ENCODE measurements at regions of chr12 and their contacts with region 1.

Region 1: DNA sequence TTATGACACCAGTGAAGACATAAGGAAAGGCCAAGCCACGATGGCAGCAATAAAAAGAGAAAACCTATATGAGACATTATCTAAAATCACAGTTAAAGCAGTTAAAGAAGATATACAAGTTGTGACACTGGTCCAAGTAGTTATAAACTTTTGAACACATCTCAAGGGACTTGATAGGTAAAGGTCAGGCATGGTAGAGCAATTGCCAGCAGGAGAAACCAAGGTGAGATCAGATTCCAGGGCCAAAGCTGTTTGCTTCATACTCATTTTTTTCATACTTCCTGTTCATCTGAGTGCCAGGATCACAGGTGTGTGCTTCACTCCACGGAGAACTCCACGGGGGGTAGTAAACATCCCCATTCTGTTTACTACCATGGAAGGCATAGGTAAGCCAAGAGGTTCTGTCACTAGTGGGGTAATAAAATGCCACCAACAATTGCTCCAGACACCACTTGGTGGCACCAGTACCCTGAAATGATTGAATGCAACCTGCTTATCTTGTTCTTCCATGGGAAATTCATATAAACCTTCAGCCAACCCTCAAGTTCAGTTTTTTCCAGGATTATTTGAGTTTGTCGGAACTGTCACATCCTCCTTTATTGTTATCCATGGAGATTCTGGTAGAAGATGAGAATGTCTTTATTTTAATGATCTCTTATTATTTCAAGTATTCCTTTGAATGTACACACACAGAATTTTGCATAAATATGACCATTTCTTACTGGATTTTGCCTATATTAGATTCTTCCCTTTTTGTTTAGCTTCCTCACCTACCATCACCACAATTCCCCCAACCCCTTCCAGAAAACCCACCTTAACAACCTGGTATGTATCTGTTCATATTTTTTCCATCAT is 59.2 kb upstream of the TSPAN8 start:
- DNase-seq: peak; percentile 20 to 79 (median 47)
- ATAC-seq: peak; percentile 95
- H3K4me3 ChIP-seq: no peak overlapping the region
- H3K27ac ChIP-seq: no peak overlapping the region
- H3K4me1 ChIP-seq: peaks cover 0 to 6% of the 10 kb centered on the region in 2 experiments; a peak in 2 of 5 replicates
- H3K27me3 ChIP-seq: no peaks in the 10 kb centered on the region
- CTCF ChIP-seq: peak; percentile 72 to 86 (median 74)
- EP300 ChIP-seq: no peak
- POLR2A ChIP-seq: no peak
- RAD21 ChIP-seq: peak; percentile 91 to 96

Region 2: DNA sequence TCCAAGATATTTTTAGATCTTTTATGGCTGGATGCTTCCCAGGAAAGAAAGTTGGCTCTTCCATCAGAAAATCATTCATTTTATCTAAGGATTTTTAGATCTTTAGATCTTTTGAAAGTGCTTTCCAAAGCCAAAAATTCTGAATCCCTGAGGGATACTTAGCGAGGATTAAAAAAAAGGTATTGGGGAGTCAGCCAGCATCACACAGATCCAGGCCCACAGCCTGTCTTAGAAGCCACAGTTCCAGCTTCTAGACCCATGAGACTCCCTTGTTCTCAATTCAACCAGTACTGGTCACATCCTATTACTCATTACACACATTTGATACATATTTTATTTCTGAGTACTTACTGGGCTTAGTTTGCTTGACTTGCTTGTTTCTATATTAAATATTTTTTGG is 109.0 kb before region 1 on chr12:
- CTCF ChIA-PET with region 1: no interaction called
- POLR2A ChIA-PET with region 1: no interaction called
- in situ Hi-C with region 1: no loop called
- intact Hi-C with region 1: no loop called
- DNase-seq: no peak
- ATAC-seq: no peak
- H3K4me3 ChIP-seq: no peak overlapping the region
- H3K27ac ChIP-seq: no peak overlapping the region
- H3K4me1 ChIP-seq: no peaks in the 10 kb centered on the region
- H3K27me3 ChIP-seq: no peaks in the 10 kb centered on the region
- CTCF ChIP-seq: no peak
- EP300 ChIP-seq: no peak
- POLR2A ChIP-seq: no peak
- RAD21 ChIP-seq: no peak

Region 3: GRCh38 chr12:71371122-71371521 is 154.2 kb after region 1 on chr12:
- CTCF ChIA-PET with region 1: no interaction called
- POLR2A ChIA-PET with region 1: no interaction called
- in situ Hi-C with region 1: no loop called
- intact Hi-C with region 1: loop called (anchors 1 kb)
- DNase-seq: peak in 1 of 4 experiments; percentile 56
- ATAC-seq: peak; percentile 82
- H3K4me3 ChIP-seq: no peak overlapping the region
- H3K27ac ChIP-seq: no peak overlapping the region
- H3K4me1 ChIP-seq: no peaks in the 10 kb centered on the region; a peak in 1 of 5 replicates
- H3K27me3 ChIP-seq: no peaks in the 10 kb centered on the region
- CTCF ChIP-seq: peak; percentile 30 to 61 (median 44); a peak in 3 of 6 replicates
- EP300 ChIP-seq: no peak
- POLR2A ChIP-seq: no peak
- RAD21 ChIP-seq: peak; percentile 65 to 76

Region 4: GRCh38 chr12:71392521-71393145 is 175.7 kb after region 1 on chr12:
- CTCF ChIA-PET with region 1: no interaction called
- POLR2A ChIA-PET with region 1: no interaction called
- in situ Hi-C with region 1: loop called (anchors 10 kb)
- intact Hi-C with region 1: loop called (anchors 1 kb)
- DNase-seq: peak; percentile 63 to 79 (median 70)
- ATAC-seq: peak; percentile 98
- H3K4me3 ChIP-seq: no peak overlapping the region
- H3K27ac ChIP-seq: no peak overlapping the region
- H3K4me1 ChIP-seq: peaks cover 0 to 10% of the 10 kb centered on the region in 2 experiments; a peak in 2 of 5 replicates
- H3K27me3 ChIP-seq: no peaks in the 10 kb centered on the region
- CTCF ChIP-seq: peak; percentile 73 to 85 (median 84)
- EP300 ChIP-seq: no peak
- POLR2A ChIP-seq: no peak
- RAD21 ChIP-seq: peak; percentile 63 to 89

Region 5: DNA sequence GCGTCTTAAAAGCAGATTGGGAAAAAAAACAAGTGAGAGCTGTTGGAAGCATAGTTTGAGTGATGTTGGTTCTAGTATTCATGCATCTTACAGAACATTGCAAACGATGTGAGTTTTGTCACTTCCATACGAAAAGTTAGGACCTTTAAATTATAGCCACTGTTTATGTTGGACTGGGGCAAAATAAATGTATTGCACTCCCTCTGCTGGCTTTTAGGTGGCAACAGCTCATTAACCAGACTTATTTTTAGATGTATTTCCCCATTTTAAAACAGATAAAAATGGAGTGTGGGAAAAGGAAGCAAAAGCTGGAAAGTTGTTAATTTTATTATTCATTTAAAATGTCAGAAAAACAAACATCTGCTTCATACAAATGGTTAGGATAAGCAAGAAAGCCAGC is 334.6 kb after region 1 on chr12:
- CTCF ChIA-PET with region 1: no interaction called
- POLR2A ChIA-PET with region 1: interaction called, 3 read pairs
- in situ Hi-C with region 1: no loop called
- intact Hi-C with region 1: loop called (anchors 1 kb)
- DNase-seq: peak in 2 of 4 experiments; percentile 13 to 28
- ATAC-seq: peak; percentile 73
- H3K4me3 ChIP-seq: no peak overlapping the region
- H3K27ac ChIP-seq: no peak overlapping the region
- H3K4me1 ChIP-seq: no peaks in the 10 kb centered on the region
- H3K27me3 ChIP-seq: no peaks in the 10 kb centered on the region
- CTCF ChIP-seq: peak; percentile 48 to 79 (median 60); a peak in 4 of 6 replicates
- EP300 ChIP-seq: no peak
- POLR2A ChIP-seq: no peak
- RAD21 ChIP-seq: peak; percentile 67 to 83

Region 6: GRCh38 chr12:71567537-71567936 is 350.6 kb after region 1 on chr12:
- CTCF ChIA-PET with region 1: no interaction called
- POLR2A ChIA-PET with region 1: no interaction called
- in situ Hi-C with region 1: no loop called
- intact Hi-C with region 1: loop called (anchors 5 kb)
- DNase-seq: peak; percentile 18 to 74 (median 31)
- ATAC-seq: peak; percentile 95
- H3K4me3 ChIP-seq: no peak overlapping the region
- H3K27ac ChIP-seq: no peak overlapping the region
- H3K4me1 ChIP-seq: peaks cover 0 to 10% of the 10 kb centered on the region in 2 experiments; a peak in 4 of 5 replicates
- H3K27me3 ChIP-seq: no peaks in the 10 kb centered on the region
- CTCF ChIP-seq: peak; percentile 39 to 50 (median 48); a peak in 5 of 6 replicates
- EP300 ChIP-seq: no peak
- POLR2A ChIP-seq: no peak
- RAD21 ChIP-seq: peak; percentile 54 to 58

Region 7: DNA sequence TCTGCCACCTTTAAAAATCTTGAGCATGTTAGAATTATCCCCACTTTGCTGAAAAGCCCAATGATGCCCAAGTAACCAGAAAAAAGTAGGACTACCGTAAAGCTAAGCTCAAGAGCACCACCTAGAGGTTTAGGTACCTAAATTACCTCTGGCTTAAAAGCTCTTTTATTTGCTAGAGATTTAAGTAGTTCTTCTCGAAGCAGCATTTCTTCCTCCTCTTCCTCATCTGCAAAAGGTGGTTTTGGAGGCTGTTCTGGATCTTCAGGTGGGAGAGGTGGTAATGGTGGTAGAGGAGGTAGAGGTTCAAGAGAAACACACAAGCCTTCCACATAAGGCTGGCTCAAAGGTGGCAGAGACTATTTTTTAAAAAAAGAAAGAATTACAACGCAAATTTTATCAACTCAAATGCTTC is 419.8 kb after region 1 on chr12:
- CTCF ChIA-PET with region 1: interaction called, 3 read pairs
- POLR2A ChIA-PET with region 1: no interaction called
- in situ Hi-C with region 1: no loop called
- intact Hi-C with region 1: loop called (anchors 10 kb)
- DNase-seq: peak; percentile 42 to 70 (median 49)
- ATAC-seq: peak; percentile 66; the same call in 2 of the 3 replicates
- H3K4me3 ChIP-seq: no peak overlapping the region
- H3K27ac ChIP-seq: no peak overlapping the region
- H3K4me1 ChIP-seq: peaks cover 0 to 1% of the 10 kb centered on the region in 2 experiments; a peak in 2 of 5 replicates
- H3K27me3 ChIP-seq: no peaks in the 10 kb centered on the region
- CTCF ChIP-seq: peak; percentile 43 to 68 (median 66); a peak in 5 of 6 replicates
- EP300 ChIP-seq: no peak
- POLR2A ChIP-seq: no peak
- RAD21 ChIP-seq: peak; percentile 42 to 64; a peak in 3 of 4 replicates

Region 8: DNA sequence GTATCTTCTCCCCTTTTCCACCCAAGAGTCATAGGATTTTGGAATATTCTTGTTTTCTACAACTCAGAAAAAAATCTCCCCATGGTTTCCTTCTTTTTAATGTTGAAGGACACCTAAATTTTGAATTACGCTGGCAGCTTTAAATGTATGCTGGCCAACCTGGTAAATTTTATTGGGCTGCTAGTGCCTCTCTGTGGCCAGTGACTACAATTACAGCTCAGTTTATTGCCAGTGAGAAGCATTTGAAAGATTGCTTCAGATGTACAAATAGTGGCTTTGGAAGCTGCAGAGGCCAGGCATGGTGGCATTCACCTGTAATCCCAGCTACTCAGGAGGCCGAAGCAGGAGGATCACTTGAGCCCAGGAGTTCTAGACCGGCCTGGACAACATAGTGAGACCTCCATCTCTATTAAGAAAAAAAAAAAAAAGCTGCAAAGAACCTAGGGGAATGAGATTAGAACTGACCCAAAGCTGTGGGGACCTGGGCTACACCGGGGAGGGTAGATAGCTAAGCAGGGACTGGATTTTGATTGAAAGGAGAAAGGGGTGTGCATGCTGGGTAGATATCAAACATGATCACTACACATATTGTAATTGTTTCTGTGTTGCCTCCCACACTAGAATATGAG is 530.1 kb after region 1 on chr12:
- CTCF ChIA-PET with region 1: no interaction called
- POLR2A ChIA-PET with region 1: no interaction called
- in situ Hi-C with region 1: no loop called
- intact Hi-C with region 1: loop called (anchors 5 kb)
- DNase-seq: peak in 3 of 4 experiments; percentile 28 to 73 (median 45)
- ATAC-seq: peak; percentile 84
- H3K4me3 ChIP-seq: no peak overlapping the region
- H3K27ac ChIP-seq: no peak overlapping the region
- H3K4me1 ChIP-seq: peaks cover 3 to 10% of the 10 kb centered on the region in 2 experiments; a peak in 2 of 5 replicates
- H3K27me3 ChIP-seq: no peaks in the 10 kb centered on the region
- CTCF ChIP-seq: peak; percentile 69 to 89 (median 77)
- EP300 ChIP-seq: no peak
- POLR2A ChIP-seq: no peak
- RAD21 ChIP-seq: peak; percentile 88 to 91

Measured in K562 (cell line).